ENCODE measurements at regions of chr19 and their contacts with region 1.

Region 1: GRCh38 chr19:38736413-38737280 is 7.6 kb downstream of the CAPN12 start:
- DNase-seq: peak; percentile 36
- H3K4me3 ChIP-seq: peak overlapping the region in 1 of 3 experiments; percentile 41
- H3K27ac ChIP-seq: no peak overlapping the region
- H3K4me1 ChIP-seq: peaks cover 33% of the 10 kb centered on the region
- H3K27me3 ChIP-seq: no peaks in the 10 kb centered on the region
- CTCF ChIP-seq: no peak

Region 2: GRCh38 chr19:38778733-38779132 is 42.1 kb after region 1 on chr19:
- CTCF ChIA-PET with region 1: no interaction called
- dilution Hi-C with region 1: no loop called
- in situ Hi-C with region 1: no loop called
- intact Hi-C with region 1: loop called (anchors 5 kb)
- DNase-seq: no peak
- H3K4me3 ChIP-seq: no peak overlapping the region
- H3K27ac ChIP-seq: no peak overlapping the region
- H3K4me1 ChIP-seq: peaks cover 18% of the 10 kb centered on the region
- H3K27me3 ChIP-seq: no peaks in the 10 kb centered on the region
- CTCF ChIP-seq: no peak

Region 3: DNA sequence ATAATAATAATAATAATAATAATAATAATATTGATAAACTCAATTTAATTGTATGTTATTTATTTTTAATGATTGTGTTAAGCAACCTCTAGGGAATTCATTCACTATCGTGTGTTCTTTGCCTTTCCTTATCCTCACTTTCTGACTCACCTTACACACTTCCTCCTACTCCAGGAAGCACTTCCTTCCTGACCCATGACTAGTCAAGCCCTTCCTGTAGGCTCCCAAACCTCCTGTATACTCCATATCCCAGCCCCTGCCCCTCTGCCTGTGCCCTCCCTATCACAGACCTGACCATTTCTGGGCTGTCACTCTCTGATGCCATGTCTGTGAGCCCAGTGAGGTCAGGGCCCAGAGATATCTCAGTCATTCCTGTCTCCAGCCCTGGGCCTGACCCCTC is 68.5 kb after region 1 on chr19:
- CTCF ChIA-PET with region 1: no interaction called
- dilution Hi-C with region 1: no loop called
- in situ Hi-C with region 1: no loop called
- intact Hi-C with region 1: no loop called
- DNase-seq: no peak
- H3K4me3 ChIP-seq: no peak overlapping the region
- H3K27ac ChIP-seq: no peak overlapping the region
- H3K4me1 ChIP-seq: no peaks in the 10 kb centered on the region
- H3K27me3 ChIP-seq: no peaks in the 10 kb centered on the region
- CTCF ChIP-seq: no peak

Measured in mammary epithelial cell (primary cell).